Vagina (tissue), 2 donors: ENCODE measurements at regions of chr5 and their contacts with region 1.

Region 1: DNA sequence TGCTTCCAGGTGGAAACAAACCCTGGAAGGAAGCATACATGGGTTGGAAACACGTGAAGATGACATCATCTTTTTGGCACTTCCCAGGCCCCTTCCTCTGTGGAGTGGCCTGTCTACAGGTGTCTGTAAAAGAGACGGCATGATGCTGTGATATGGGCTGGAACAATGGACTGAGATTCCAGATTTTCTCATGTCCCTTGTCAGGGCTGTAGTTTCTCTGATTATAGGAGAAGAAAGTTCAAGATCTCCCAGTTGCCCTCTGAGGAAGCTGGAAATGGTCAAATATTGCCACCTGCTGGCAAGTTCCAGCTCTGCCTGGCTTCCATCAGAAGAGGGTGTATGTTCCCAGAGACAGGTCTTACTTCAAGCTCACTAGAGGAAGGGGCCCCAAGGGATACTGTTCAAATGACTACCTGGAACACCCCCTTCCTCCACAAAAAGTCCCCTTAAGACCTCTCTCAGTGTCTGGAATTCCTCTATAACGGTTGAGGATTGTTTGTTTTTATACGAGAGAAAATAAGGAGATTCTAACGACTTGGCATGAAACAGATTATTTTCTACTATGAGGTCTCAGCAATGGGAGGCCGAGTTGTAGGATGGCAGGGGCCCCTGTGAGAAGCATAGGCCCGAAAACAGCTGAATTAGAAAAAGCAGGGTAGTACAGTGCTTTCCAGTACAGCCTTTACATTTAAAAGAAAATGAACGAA is 7.3 kb upstream of the ANXA6 start:
- DNase-seq: no peak
- H3K4me3 ChIP-seq: no peak overlapping the region
- H3K27ac ChIP-seq: no peak overlapping the region
- H3K4me1 ChIP-seq: peaks cover 5% of the 10 kb centered on the region
- H3K27me3 ChIP-seq: no peaks in the 10 kb centered on the region
- CTCF ChIP-seq: peak; percentile 80 to 94 (median 94)
- POLR2A ChIP-seq: no peak

Region 2: GRCh38 chr5:151126199-151126645 is 38.6 kb before region 1 on chr5:
- intact Hi-C with region 1: loop called (anchors 5 kb)
- DNase-seq: no peak
- H3K4me3 ChIP-seq: no peak overlapping the region
- H3K27ac ChIP-seq: no peak overlapping the region
- H3K4me1 ChIP-seq: no peaks in the 10 kb centered on the region
- H3K27me3 ChIP-seq: no peaks in the 10 kb centered on the region
- CTCF ChIP-seq: peak; percentile 64 to 91 (median 89)
- POLR2A ChIP-seq: no peak

Region 3: DNA sequence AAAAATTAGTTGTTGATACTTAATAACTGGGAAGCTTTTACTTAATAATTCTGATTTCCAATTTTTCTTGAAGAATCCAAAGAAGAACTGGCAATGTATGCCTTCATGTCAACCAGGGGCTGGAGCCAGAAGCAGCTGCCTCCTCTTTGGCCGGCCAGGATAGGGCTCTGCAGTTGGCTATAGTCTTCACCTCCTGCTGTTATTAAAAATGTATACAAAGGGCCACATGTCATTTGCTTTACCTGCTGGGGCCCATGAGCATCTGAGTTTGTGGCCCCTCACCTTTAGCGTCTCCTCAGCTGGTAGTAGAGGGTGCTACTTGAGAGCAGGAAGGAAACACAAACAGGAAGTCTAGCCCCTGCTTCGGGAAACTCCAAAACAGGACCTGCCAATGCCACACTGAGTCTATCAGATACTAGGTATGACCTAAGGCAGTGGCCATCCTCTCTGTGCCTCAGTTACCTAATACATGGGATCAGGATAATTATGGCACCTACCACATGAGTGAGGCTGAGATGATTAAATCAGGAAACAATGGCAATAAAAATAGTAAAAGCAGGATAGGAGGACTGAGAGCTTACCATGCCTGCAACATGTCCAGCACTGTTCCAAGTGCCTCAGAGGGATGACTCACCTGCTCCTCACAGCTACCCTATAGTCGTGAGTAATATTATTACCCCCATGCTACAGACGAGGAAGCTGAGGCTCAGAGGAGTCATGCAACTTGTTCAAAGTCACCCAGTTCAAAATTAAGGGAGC is 37.7 kb after region 1 on chr5:
- intact Hi-C with region 1: no loop called
- DNase-seq: peak in 1 of 2 donors; percentile 64
- H3K4me3 ChIP-seq: no peak overlapping the region
- H3K27ac ChIP-seq: no peak overlapping the region
- H3K4me1 ChIP-seq: peaks cover 1% of the 10 kb centered on the region
- H3K27me3 ChIP-seq: no peaks in the 10 kb centered on the region
- CTCF ChIP-seq: no peak
- POLR2A ChIP-seq: no peak